Heart left ventricle (tissue), 16 donors: ENCODE measurements at regions of chr7 and their contacts with region 1.

Region 1: GRCh38 chr7:156473476-156474240 is 166.9 kb upstream of the RNF32 start:
- DNase-seq: no peak
- ATAC-seq: no peak
- H3K4me3 ChIP-seq: no peak overlapping the region
- H3K27ac ChIP-seq: no peak overlapping the region
- H3K4me1 ChIP-seq: no peaks in the 10 kb centered on the region
- H3K27me3 ChIP-seq: peaks cover 0 to 26% (median 0%) of the 10 kb centered on the region in 9 donors
- CTCF ChIP-seq: peak; percentile 42 to 71 (median 54)
- POLR2A ChIP-seq: no peak

Region 2: GRCh38 chr7:155804897-155805825 is 668.5 kb before region 1 on chr7:
- intact Hi-C with region 1: loop called in 5 of 10 experiments (anchors 2 to 5 kb)
- DNase-seq: peak in 3 of 5 donors; percentile 31 to 69 (median 50)
- ATAC-seq: peak in 3 of 4 donors; percentile 63 to 82 (median 75)
- H3K4me3 ChIP-seq: peak overlapping the region; percentile 12 to 52 (median 40)
- H3K27ac ChIP-seq: no peak overlapping the region
- H3K4me1 ChIP-seq: peaks cover 0 to 70% (median 34%) of the 10 kb centered on the region in 12 donors
- H3K27me3 ChIP-seq: peaks cover 68 to 100% (median 92%) of the 10 kb centered on the region in 9 donors
- CTCF ChIP-seq: peak in 11 of 12 donors; percentile 13 to 60 (median 40)
- POLR2A ChIP-seq: no peak

Region 3: DNA sequence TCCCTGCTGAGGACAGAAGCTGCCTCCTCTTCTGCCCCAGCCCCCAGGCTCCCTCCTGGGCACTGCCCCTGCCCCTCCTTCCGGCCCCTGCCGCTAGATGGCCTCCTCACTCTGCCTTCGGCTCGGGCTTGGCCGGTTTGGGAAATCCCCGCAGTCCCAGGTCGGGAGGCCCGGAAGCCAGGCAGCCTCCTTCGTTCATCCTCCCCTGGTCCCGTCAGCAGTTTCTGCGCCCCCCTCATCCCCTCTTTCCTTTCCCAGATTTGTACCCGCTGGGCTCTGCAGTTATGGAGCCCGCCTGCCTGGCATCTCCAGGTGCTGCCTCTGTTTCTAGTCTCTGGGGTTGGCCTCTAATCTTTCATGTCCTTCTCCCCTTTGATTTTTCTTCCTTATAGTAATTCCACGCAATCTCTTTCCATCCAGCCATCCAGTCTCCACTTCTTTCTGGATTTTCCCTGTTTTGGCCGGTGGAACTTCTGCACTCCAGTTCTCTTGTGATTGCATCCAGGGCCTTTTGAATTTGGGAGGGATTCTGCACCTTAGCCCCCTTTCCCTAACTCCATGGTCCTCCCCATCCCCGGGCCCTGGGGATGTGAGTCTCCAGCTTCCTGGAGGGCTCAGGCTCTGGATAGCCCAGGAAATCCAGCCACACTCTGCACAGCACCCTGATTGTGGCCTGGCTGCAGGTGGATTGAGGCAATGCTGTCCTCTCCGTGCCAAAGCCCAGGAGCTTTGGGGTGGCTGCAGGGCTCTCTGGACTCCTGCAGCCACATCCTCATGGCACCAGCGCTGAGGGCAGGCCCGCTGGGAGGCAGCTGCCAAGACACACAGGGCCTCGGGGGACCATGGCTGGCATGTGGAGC is 658.1 kb before region 1 on chr7:
- intact Hi-C with region 1: loop called in 8 of 10 experiments (anchors 5 kb)
- DNase-seq: peak in 4 of 5 donors; percentile 27 to 75 (median 33)
- ATAC-seq: peak; percentile 58 to 81 (median 70)
- H3K4me3 ChIP-seq: no peak overlapping the region
- H3K27ac ChIP-seq: no peak overlapping the region
- H3K4me1 ChIP-seq: peaks cover 0 to 11% (median under 1%) of the 10 kb centered on the region in 12 donors
- H3K27me3 ChIP-seq: peaks cover 31 to 96% (median 61%) of the 10 kb centered on the region in 9 donors
- CTCF ChIP-seq: peak; percentile 13 to 59 (median 44)
- POLR2A ChIP-seq: no peak

Region 4: DNA sequence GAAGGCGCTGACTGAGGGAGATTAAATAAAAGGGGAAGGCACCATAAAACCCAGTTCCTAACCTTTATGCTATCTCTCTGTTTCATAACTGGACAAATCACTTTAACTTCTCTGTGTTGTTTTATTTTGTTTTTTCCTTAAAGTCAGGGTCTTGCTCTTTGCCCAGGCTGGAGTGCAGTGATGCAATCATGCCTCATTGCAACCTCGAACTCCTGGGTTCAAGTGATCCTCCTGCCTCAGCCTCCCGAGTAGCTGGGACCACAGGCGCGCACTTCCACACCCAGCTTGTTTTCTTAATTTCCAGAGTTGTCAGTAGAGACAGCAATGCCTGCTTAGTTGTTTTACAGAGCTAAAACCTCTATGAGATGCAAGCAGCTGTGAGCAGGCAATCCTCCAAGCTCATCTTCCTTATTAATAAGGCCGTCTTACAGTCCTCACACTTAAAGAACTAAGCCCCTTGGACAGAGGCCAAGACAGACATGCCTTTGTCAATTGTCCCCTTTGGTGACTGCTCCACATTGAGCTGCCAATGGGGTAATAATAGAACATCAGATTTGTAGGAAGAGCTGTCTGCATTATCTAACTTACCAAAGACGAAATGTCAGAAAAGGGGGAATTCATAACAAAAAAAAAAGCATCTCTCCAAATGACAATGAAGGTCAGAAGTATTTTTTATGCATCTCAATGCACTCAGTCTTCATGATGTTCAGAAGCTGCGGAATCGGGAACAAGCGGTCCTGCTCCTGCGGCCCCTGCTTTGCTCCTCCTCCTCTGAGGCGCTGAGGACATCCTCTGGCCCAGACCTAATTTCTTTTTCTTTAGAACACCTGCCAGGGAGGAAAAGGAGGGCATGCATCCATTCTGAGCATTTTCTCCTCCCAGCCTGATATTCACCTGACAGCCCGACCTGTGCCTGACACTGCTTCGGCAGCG is 104.3 kb after region 1 on chr7:
- intact Hi-C with region 1: no loop called
- DNase-seq: no peak
- ATAC-seq: no peak
- H3K4me3 ChIP-seq: no peak overlapping the region
- H3K27ac ChIP-seq: no peak overlapping the region
- H3K4me1 ChIP-seq: no peaks in the 10 kb centered on the region
- H3K27me3 ChIP-seq: peaks cover 0 to 6% (median 0%) of the 10 kb centered on the region in 9 donors
- CTCF ChIP-seq: no peak
- POLR2A ChIP-seq: no peak

Region 5: DNA sequence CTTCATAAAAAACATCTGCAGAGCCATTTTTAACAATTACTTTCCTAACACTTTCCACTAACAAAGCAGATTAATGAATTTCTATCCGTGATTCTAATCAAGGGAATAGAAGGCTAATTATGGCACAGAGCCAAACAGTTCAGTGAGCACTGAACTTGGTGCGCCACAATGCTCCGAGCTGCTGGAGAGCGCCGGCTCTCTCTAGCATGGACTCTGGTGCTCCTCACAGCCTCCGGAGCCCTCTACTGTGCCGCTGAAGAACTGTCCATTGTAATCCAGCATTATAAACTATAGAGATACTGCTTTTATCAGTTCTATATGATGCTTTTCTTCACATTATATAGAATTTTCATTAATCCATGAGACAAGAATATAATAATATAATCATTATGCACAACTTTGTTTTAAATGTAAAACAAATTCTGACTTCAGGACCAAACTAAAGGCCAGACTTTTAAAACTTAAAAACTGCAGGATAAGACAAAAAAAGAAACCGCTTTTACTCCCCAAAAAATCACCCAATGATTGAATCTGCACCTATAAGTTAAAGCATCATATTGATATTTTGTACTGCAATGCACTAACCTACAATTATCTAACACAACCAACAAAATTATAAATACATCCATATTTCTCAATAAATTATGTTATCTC is 290.5 kb after region 1 on chr7:
- intact Hi-C with region 1: loop called in 1 of 10 experiments (anchors 10 kb)
- DNase-seq: peak; percentile 59 to 76 (median 64)
- ATAC-seq: peak; percentile 93 to 98 (median 96)
- H3K4me3 ChIP-seq: no peak overlapping the region
- H3K27ac ChIP-seq: no peak overlapping the region
- H3K4me1 ChIP-seq: peaks cover 0 to 9% (median 0%) of the 10 kb centered on the region in 12 donors
- H3K27me3 ChIP-seq: no peaks in the 10 kb centered on the region
- CTCF ChIP-seq: peak; percentile 39 to 73 (median 62)
- POLR2A ChIP-seq: no peak